Gastrocnemius medialis (tissue), 4 donors: ENCODE measurements at regions of chr5 and their contacts with region 1.

Region 1: GRCh38 chr5:69093771-69094482 is at the start of gene SLC30A5:
- DNase-seq: peak; percentile 99 to 100
- ATAC-seq: peak; percentile 99
- H3K4me3 ChIP-seq: peak within 1 kb of the TSS; percentile 83 to 90 (median 88)
- H3K27ac ChIP-seq: peak within 1 kb of the TSS; percentile 91 to 95 (median 92)
- H3K4me1 ChIP-seq: peaks cover 15 to 16% of the 10 kb centered on the region in 2 donors
- H3K27me3 ChIP-seq: no peaks in the 10 kb centered on the region
- CTCF ChIP-seq: peak; percentile 87 to 95 (median 91)
- POLR2A ChIP-seq: peak; percentile 72 to 82
- total RNA-seq, gene SLC30A5: 14.6 to 35.3 (median 24.5) TPM

Region 2: DNA sequence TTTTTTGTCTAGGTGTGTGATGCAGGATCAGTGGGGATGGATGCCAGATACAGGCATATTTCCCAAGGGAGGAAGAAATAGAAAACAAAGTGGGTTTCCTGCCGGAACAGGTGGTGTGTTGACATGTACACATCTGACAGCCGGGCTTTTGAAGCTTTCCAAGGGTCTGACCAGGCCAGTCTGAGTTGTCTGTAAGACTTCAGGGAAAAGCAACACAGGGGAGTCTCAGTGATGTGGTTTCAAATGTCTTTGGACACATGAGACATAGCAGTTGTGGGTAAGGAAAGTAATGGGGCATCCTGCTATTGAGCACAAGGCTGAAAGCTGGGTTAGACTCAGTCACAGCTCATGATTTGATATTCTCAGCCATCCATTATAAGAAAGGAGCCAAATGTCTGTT is 603.5 kb before region 1 on chr5:
- in situ Hi-C with region 1: no loop called
- intact Hi-C with region 1: no loop called
- DNase-seq: no peak
- ATAC-seq: no peak
- H3K4me3 ChIP-seq: no peak overlapping the region
- H3K27ac ChIP-seq: no peak overlapping the region
- H3K4me1 ChIP-seq: no peaks in the 10 kb centered on the region
- H3K27me3 ChIP-seq: no peaks in the 10 kb centered on the region
- CTCF ChIP-seq: no peak
- POLR2A ChIP-seq: no peak

Region 3: GRCh38 chr5:69042915-69043658 is 50.8 kb before region 1 on chr5:
- in situ Hi-C with region 1: no loop called
- intact Hi-C with region 1: loop called (anchors 2 kb)
- DNase-seq: peak; percentile 61 to 69
- ATAC-seq: peak; percentile 97
- H3K4me3 ChIP-seq: peak overlapping the region; percentile 50 to 69 (median 58)
- H3K27ac ChIP-seq: peak overlapping the region; percentile 65 to 77 (median 68)
- H3K4me1 ChIP-seq: no peaks in the 10 kb centered on the region
- H3K27me3 ChIP-seq: no peaks in the 10 kb centered on the region
- CTCF ChIP-seq: peak; percentile 77 to 85 (median 82)
- POLR2A ChIP-seq: no peak

Region 4: GRCh38 chr5:69217548-69218526 is 123.9 kb after region 1 on chr5:
- in situ Hi-C with region 1: no loop called
- intact Hi-C with region 1: loop called (anchors 2 kb)
- DNase-seq: peak; percentile 96 to 97
- ATAC-seq: peak; percentile 95 to 97
- H3K4me3 ChIP-seq: peak overlapping the region; percentile 95 to 100 (median 99)
- H3K27ac ChIP-seq: peak overlapping the region; percentile 93 to 100 (median 98)
- H3K4me1 ChIP-seq: peaks cover 10% of the 10 kb centered on the region in 2 donors
- H3K27me3 ChIP-seq: no peaks in the 10 kb centered on the region
- CTCF ChIP-seq: peak in 4 of 5 experiments; percentile 42 to 62 (median 51)
- POLR2A ChIP-seq: peak; percentile 92 to 95

Region 5: GRCh38 chr5:69334793-69335268 is 240.9 kb after region 1 on chr5:
- in situ Hi-C with region 1: loop called in 1 of 4 experiments (anchors 10 kb)
- intact Hi-C with region 1: loop called (anchors 1 kb)
- DNase-seq: peak; percentile 60 to 78
- ATAC-seq: peak; percentile 79 to 86
- H3K4me3 ChIP-seq: peak overlapping the region in 2 of 4 donors; percentile 15 to 16
- H3K27ac ChIP-seq: peak overlapping the region; percentile 14 to 68 (median 49)
- H3K4me1 ChIP-seq: peaks cover 8 to 15% of the 10 kb centered on the region in 2 donors
- H3K27me3 ChIP-seq: no peaks in the 10 kb centered on the region
- CTCF ChIP-seq: peak; percentile 46 to 82 (median 72)
- POLR2A ChIP-seq: no peak